Right cardiac atrium (tissue), 5 donors: ENCODE measurements at regions of chr4 and their contacts with region 1.

Region 1: DNA sequence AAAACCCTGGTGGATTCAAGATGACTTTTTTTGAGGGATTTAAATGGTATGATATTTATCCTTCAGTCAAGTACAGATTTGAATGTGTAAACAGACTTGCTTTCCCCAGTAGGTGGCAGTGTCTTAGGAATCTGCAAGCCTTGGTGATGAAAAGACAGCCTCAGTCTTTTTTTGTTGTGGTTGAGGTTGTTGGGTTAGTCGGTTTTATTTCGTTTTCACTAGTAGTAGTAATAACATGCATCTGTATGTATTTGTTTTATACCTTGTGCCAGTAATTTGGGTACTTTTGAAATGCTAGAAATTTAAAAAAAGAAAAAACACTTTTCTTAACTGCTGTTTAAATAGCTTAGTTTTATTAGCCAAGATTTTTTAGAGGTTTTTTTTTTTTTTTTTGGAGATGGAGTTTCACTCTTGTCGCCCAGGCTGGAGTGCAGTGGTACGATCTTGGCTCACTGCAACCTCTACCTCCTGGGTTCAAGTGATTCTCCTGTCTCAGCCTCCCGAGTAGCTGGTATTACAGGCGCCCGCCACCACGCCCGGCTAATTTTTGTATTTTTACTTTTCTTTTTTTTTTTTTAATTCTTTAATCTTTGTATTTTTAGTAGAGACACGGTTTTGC is 39.2 kb downstream of the COPS4 start:
- DNase-seq: no peak
- ATAC-seq: peak; percentile 56 to 71
- H3K4me3 ChIP-seq: no peak overlapping the region
- H3K27ac ChIP-seq: no peak overlapping the region
- H3K4me1 ChIP-seq: no peaks in the 10 kb centered on the region
- H3K27me3 ChIP-seq: no peaks in the 10 kb centered on the region

Region 2: GRCh38 chr4:83267121-83267829 is 193.1 kb after region 1 on chr4:
- intact Hi-C with region 1: loop called in 1 of 4 experiments (anchors 10 kb)
- DNase-seq: peak in 1 of 3 donors; percentile 38
- ATAC-seq: peak; percentile 29 to 69
- H3K4me3 ChIP-seq: no peak overlapping the region
- H3K27ac ChIP-seq: no peak overlapping the region
- H3K4me1 ChIP-seq: no peaks in the 10 kb centered on the region
- H3K27me3 ChIP-seq: no peaks in the 10 kb centered on the region